Adrenal gland (tissue), 19 donors: ENCODE measurements at regions of chr17 and their contacts with region 1.

Region 1: DNA sequence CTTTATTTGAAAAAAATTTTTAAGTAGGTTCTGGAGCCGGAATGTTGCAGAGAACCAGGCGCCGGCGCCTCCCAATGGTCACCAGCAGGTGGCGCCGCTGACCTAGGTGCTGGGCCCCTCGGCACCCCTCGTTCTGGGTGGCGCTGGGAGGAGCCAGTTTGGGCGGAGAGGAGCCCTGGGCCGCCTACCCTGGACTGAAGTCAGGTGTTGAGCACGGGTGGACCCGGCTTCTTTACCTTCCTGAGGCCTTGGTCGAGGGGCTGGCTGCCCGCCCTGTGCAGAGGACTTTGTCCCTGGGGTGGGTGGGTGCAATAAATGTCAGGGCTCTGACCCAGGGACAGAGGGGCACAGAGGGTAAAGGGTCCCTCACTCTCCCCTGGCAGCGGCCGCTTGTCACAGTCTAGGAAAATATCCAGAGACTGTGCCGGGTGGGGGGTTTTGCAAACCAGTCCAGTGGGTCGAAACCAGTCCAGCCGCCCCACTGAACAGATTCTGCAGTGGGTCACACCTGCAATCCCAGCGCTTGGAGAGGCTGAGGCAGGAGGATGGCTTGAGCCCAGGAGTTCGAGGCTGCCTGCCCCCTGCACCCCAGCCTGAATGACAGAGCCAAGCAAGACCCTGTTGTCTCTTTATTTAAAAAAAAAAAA is 30.1 kb upstream of the TNFRSF13B start:
- DNase-seq: peak; percentile 65 to 83 (median 80)
- H3K4me3 ChIP-seq: no peak overlapping the region
- H3K27ac ChIP-seq: no peak overlapping the region
- H3K4me1 ChIP-seq: peaks cover 0 to 4% of the 10 kb centered on the region in 2 donors
- H3K27me3 ChIP-seq: no peaks in the 10 kb centered on the region
- CTCF ChIP-seq: peak; percentile 85 to 97 (median 92)
- POLR2A ChIP-seq: no peak

Region 2: GRCh38 chr17:17151962-17152361 is 150.0 kb after region 1 on chr17:
- intact Hi-C with region 1: loop called (anchors 10 kb)
- DNase-seq: peak; percentile 91 to 99 (median 97)
- H3K4me3 ChIP-seq: no peak overlapping the region
- H3K27ac ChIP-seq: peak overlapping the region in 4 of 5 donors; percentile 32 to 62 (median 51)
- H3K4me1 ChIP-seq: peaks cover 14 to 17% of the 10 kb centered on the region in 2 donors
- H3K27me3 ChIP-seq: no peaks in the 10 kb centered on the region
- CTCF ChIP-seq: no peak
- POLR2A ChIP-seq: no peak

Region 3: DNA sequence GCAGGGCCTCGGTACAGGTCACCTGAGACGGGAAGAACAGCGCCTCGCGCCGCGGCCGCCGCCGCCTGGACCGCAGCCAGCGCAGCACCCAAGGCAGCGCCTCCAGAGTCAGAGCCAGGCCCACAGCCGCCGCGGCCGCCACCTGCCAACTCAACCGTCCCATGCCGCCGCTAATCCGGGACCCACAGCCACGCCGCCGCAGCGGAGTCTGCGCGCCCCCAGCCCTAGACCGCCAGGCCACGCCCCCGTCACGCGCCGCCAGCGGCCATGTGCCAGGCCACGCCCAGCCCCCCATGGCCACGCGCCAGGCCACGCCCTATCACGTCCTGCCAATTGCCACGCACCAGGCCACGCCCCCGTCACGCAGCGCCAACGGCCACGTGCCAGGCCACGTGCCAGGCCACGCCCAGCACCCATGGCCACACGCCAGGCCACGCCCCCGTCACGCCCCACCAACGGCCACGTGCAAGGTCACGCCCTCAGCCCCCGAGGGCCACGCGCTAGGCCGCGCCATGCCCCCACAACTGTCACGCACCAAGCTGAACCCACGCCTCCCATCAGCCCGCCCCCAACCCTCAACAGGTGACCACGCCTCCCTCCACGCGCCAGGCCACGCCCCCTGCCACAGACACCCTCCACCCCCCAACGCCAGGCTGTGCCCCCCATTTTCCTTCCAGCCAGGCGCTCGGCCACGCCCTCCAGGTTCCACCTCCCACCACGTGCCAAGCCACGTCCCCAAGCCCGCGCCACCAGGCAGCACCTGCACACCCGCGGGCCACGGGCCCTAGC is 204.3 kb after region 1 on chr17 and contains the start of gene PLD6:
- intact Hi-C with region 1: no loop called
- DNase-seq: peak; percentile 71 to 93 (median 89)
- H3K4me3 ChIP-seq: peak within 1 kb of the TSS in 2 of 4 donors; percentile 36 to 67
- H3K27ac ChIP-seq: peak within 1 kb of the TSS; percentile 48 to 90 (median 85)
- H3K4me1 ChIP-seq: peaks cover 29 to 39% of the 10 kb centered on the region in 2 donors
- H3K27me3 ChIP-seq: no peaks in the 10 kb centered on the region
- CTCF ChIP-seq: peak in 1 of 6 experiments; percentile 1
- POLR2A ChIP-seq: peak in 1 of 2 donors; percentile 50
- total RNA-seq, gene PLD6: 1.9 to 14.2 (median 3.3) TPM

Region 4: DNA sequence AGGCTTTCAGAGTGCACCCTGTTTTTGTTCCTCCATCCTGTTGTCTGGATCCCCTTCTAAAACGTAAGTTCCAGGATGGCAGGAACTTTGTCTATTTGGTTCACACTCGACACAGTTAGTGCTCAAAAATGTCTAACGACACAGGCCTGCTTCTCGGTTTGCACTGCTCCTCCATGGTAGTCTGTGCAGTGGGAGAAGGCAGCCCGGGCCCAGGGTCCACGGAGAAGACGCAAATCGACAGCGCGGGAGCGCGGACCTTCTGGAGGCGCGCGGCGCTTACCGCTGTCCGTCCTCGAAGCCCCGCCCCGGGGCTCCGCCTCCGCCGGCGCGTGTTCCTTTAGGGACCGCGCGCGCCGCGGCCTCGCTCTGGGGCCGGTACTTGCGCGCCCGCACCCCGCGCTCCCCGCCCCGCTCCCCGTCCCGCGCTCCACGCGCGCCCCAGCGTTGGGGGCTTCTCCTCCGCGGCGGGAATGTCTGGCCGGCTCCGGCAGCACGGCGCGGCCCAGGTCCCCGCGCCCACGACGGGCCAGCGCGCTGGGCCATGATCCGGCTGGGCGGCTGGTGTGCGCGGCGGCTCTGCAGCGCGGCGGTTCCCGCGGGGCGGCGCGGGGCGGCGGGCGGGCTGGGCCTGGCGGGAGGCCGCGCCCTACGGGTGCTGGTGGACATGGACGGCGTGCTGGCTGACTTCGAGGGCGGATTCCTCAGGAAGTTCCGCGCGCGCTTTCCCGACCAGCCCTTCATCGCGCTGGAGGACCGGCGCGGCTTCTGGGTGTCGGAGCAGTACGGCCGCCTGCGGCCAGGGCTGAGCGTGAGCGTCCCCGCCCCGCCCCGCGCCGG is 301.2 kb after region 1 on chr17 and contains the start of gene NT5M:
- intact Hi-C with region 1: loop called in 1 of 2 experiments (anchors 10 kb)
- DNase-seq: peak; percentile 51 to 79 (median 71)
- H3K4me3 ChIP-seq: peak within 1 kb of the TSS in 2 of 4 donors; percentile 45 to 75
- H3K27ac ChIP-seq: peak within 1 kb of the TSS in 3 of 5 donors; percentile 37 to 82 (median 50)
- H3K4me1 ChIP-seq: peaks cover 5 to 18% of the 10 kb centered on the region in 2 donors
- H3K27me3 ChIP-seq: no peaks in the 10 kb centered on the region
- CTCF ChIP-seq: no peak
- POLR2A ChIP-seq: peak in 1 of 2 donors; percentile 19
- total RNA-seq, gene NT5M: 1.0 to 4.8 (median 1.7) TPM

Region 5: DNA sequence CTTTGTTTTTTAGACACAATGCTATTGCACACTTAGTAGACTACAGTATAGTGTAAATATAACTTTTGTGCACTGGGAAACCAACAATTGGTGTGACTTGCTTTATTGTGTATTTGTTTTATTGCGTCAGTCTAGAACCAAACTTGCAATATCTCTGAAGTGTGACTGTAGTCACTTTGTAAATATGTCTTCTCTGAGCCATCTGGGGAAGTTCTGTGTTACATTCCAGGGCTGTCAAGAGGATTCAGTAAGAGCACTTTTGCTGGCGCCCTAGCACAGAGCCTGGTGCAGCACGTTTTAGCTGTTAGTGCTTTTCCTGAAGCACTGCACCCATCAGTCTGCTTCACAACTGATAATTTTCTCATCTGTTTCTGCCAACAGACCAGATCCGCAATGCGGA is 374.4 kb after region 1 on chr17:
- intact Hi-C with region 1: no loop called
- DNase-seq: no peak
- H3K4me3 ChIP-seq: no peak overlapping the region
- H3K27ac ChIP-seq: no peak overlapping the region
- H3K4me1 ChIP-seq: no peaks in the 10 kb centered on the region
- H3K27me3 ChIP-seq: no peaks in the 10 kb centered on the region
- CTCF ChIP-seq: no peak
- POLR2A ChIP-seq: no peak